ENCODE measurements at regions of chr7 and their contacts with region 1.

Region 1: GRCh38 chr7:44489955-44490350 is 505 bp downstream of the NUDCD3 start:
- DNase-seq: no peak
- H3K4me3 ChIP-seq: peak overlapping the region; percentile 60 to 85 (median 77)
- H3K27ac ChIP-seq: peak overlapping the region; percentile 94 to 99 (median 97)
- H3K4me1 ChIP-seq: peaks cover 6 to 53% (median 31%) of the 10 kb centered on the region in 3 donors
- H3K27me3 ChIP-seq: peaks cover 0 to 11% (median 0%) of the 10 kb centered on the region in 4 donors
- CTCF ChIP-seq: no peak
- POLR2A ChIP-seq: no peak

Region 2: GRCh38 chr7:44565097-44565794 is 75.3 kb after region 1 on chr7:
- intact Hi-C with region 1: loop called (anchors 5 kb)
- DNase-seq: no peak
- H3K4me3 ChIP-seq: no peak overlapping the region
- H3K27ac ChIP-seq: no peak overlapping the region
- H3K4me1 ChIP-seq: peaks cover 3 to 28% (median 7%) of the 10 kb centered on the region in 3 donors
- H3K27me3 ChIP-seq: no peaks in the 10 kb centered on the region
- CTCF ChIP-seq: peak; percentile 93 to 98 (median 97)
- POLR2A ChIP-seq: no peak